ENCODE measurements at regions of chr7 and their contacts with region 1.

Region 1: DNA sequence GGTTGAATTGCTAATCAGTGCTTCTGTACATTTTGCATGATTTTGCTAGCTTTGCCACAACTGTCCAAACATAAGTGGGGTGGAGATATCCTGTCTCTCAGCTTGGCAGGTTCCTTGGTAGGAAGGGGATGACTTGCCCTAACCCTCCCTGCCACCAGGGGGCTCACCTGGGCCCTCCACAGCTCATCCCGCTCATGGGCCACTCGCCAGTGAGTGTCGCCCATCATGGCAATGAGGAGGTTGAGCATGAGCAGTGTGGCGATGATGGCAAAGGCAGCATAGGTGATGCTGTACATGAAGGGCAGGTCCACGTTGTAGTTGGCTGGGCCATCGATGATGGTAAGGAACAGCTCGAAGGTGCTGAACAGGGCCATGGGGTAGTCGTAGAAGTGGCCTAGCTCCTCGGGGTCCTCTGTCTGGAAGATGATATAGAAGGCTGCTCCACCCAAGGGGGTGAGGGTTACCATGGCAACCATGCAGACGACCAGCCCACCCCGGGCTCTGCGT is 12.2 kb downstream of the TRPV6 start:
- DNase-seq: peak in 1 of 2 experiments; percentile 84
- H3K4me3 ChIP-seq: no peak overlapping the region
- H3K27ac ChIP-seq: no peak overlapping the region
- H3K4me1 ChIP-seq: no peaks in the 10 kb centered on the region; a peak in 1 of 7 replicates
- H3K27me3 ChIP-seq: no peaks in the 10 kb centered on the region; a peak in 1 of 7 replicates
- CTCF ChIP-seq: peak; percentile 83 to 94 (median 90)
- EP300 ChIP-seq: no peak
- POLR2A ChIP-seq: no peak
- RAD21 ChIP-seq: peak; percentile 54 to 63

Region 2: DNA sequence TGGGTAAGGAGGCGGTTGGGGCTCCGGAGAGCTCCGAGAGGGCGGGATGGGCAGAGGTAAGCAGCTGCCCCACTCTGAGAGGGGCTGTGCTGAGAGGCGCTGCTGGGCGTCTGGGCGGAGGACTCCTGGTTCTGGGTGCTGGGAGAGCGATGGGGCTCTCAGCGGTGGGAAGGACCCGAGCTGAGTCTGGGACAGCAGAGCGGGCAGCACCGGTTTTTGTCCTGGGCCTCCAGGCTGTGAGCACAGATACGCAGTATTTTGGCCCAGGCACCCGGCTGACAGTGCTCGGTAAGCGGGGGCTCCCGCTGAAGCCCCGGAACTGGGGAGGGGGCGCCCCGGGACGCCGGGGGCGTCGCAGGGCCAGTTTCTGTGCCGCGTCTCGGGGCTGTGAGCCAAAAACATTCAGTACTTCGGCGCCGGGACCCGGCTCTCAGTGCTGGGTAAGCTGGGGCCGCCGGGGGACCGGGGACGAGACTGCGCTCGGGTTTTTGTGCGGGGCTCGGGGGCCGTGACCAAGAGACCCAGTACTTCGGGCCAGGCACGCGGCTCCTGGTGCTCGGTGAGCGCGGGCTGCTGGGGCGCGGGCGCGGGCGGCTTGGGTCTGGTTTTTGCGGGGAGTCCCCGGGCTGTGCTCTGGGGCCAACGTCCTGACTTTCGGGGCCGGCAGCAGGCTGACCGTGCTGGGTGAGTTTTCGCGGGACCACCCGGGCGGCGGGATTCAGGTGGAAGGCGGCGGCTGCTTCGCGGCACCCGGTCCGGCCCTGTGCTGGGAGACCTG is 76.5 kb before region 1 on chr7:
- CTCF ChIA-PET with region 1: interaction called, 17 read pairs
- POLR2A ChIA-PET with region 1: no interaction called
- DNase-seq: peak in 1 of 2 experiments; percentile 64
- H3K4me3 ChIP-seq: peak overlapping the region; percentile 51 to 80 (median 69)
- H3K27ac ChIP-seq: no peak overlapping the region
- H3K4me1 ChIP-seq: peaks cover 14 to 30% (median 17%) of the 10 kb centered on the region in 4 experiments
- H3K27me3 ChIP-seq: peaks cover 1 to 36% (median 26%) of the 10 kb centered on the region in 4 experiments; a peak in 6 of 7 replicates
- CTCF ChIP-seq: no peak
- EP300 ChIP-seq: no peak
- POLR2A ChIP-seq: peak; percentile 21 to 43; a peak in 1 of 3 replicates
- RAD21 ChIP-seq: no peak

Region 3: DNA sequence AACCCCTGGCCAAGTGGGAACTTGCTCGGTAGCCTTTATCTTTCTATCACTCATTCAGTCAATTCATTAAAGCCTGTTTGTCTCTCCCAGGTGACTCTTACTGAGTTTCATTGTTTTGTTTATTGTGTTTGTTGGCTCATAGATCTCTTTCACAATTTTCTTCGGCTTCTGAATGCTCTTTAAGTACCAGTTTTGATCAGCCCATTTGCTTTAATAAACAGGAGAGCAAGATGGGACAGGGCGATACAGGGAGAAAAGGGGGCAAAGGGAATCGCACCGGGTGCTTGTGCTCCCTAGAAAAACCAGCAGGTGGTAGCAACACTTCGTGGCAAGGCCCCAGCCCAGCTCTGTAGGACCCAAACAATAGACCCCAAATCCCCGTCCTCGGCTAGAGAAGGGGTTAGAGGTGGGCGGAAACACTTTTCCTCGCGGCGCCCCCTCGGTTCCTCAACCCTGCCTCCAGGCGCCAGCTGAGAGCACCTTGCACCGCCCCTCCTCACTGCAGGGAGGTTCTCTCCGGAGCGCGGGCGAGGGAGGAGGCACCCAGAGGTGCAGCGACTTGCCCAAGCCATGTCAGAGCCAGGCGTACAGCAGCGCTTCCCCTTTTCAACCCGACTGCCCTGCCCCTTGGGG is 19.5 kb before region 1 on chr7:
- CTCF ChIA-PET with region 1: interaction called, 107 read pairs
- POLR2A ChIA-PET with region 1: interaction called, 4 read pairs
- DNase-seq: peak; percentile 49 to 72
- H3K4me3 ChIP-seq: peak overlapping the region; percentile 83 to 97 (median 92)
- H3K27ac ChIP-seq: no peak overlapping the region
- H3K4me1 ChIP-seq: peaks cover 0 to 12% (median 4%) of the 10 kb centered on the region in 4 experiments; a peak in 4 of 7 replicates
- H3K27me3 ChIP-seq: peaks cover 0 to 12% (median 6%) of the 10 kb centered on the region in 4 experiments; a peak in 4 of 7 replicates
- CTCF ChIP-seq: peak; percentile 68 to 84 (median 79)
- EP300 ChIP-seq: no peak
- POLR2A ChIP-seq: no peak
- RAD21 ChIP-seq: peak; percentile 77 to 87

Region 4: DNA sequence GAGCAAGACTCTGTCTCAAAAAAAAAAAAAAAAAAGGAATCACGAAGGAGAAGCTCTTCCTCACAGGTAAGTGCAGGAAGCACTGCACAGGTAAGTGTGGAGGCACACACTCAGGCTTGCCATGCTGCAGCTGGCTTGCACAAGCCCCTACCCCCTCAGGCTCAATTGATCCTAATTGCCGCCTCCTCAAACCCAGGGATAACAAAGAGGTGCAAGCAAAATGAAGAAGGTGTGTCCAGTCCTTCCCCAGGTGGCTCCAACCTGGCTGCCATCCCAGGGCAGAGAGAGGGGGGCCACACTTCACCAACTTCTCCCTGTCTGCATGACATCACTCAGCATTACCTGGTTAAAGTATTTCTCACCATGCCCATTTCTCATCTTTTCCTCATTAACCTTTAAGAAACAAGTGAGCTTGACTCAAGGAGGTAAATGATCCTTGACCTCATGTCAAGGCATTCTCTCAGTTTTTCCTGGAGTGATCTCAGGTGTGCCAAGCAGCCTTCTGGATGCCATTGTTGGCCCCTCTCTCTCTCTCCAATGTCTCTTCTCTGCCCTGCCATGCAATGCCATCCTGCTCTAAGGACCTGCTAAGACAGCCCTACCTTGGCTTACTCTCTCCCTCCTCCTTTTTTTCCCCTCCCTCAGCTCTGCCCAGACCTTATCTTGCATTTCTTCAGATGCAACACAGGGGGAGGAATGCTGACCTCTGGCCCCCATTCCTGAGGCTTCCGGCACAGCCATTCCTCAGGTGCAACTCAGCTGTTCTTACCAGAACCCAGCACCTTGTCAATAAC is 25.2 kb after region 1 on chr7:
- CTCF ChIA-PET with region 1: interaction called, 69 read pairs
- POLR2A ChIA-PET with region 1: no interaction called
- DNase-seq: peak in 1 of 2 experiments; percentile 17
- H3K4me3 ChIP-seq: no peak overlapping the region
- H3K27ac ChIP-seq: no peak overlapping the region
- H3K4me1 ChIP-seq: peaks cover 0 to 3% (median 0%) of the 10 kb centered on the region in 4 experiments; a peak in 1 of 7 replicates
- H3K27me3 ChIP-seq: no peaks in the 10 kb centered on the region; a peak in 1 of 7 replicates
- CTCF ChIP-seq: no peak
- EP300 ChIP-seq: no peak
- POLR2A ChIP-seq: no peak
- RAD21 ChIP-seq: no peak

Region 5: DNA sequence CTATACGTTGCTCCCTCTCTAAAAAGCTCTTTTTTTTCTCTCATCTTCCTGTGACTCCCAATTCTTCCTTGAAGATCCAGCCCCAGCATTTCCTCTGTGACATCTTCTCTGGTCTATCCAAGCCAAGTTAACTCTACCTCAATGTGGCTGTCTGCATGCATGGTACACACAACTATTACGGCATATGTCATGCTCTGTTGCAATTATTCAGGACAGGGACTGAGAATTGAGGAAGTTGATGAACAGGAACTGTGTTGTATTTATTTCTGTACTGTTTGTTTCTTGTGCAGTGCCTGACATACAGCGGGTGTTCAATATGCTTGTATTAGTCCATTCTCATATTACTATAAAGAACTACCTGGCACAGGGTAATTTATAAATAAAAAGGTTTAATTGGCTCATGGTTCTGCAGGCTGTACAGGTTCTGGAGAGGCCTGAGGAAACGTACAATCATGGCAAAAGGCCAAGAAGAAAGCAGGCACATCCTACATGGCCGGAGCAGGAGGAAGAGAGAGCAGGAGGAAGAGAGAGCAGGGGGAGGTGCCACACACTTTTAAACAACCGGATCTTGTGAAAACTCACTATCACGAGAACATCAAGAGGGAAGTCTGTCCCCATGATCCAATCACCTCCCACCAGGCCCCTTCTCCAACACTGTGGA is 53.9 kb after region 1 on chr7:
- CTCF ChIA-PET with region 1: interaction called, 14 read pairs
- POLR2A ChIA-PET with region 1: interaction called, 3 read pairs
- DNase-seq: no peak
- H3K4me3 ChIP-seq: no peak overlapping the region
- H3K27ac ChIP-seq: no peak overlapping the region
- H3K4me1 ChIP-seq: no peaks in the 10 kb centered on the region; a peak in 1 of 7 replicates
- H3K27me3 ChIP-seq: peaks cover 0 to 8% (median 0%) of the 10 kb centered on the region in 4 experiments; a peak in 4 of 7 replicates
- CTCF ChIP-seq: no peak
- EP300 ChIP-seq: no peak
- POLR2A ChIP-seq: no peak
- RAD21 ChIP-seq: no peak

Region 6: DNA sequence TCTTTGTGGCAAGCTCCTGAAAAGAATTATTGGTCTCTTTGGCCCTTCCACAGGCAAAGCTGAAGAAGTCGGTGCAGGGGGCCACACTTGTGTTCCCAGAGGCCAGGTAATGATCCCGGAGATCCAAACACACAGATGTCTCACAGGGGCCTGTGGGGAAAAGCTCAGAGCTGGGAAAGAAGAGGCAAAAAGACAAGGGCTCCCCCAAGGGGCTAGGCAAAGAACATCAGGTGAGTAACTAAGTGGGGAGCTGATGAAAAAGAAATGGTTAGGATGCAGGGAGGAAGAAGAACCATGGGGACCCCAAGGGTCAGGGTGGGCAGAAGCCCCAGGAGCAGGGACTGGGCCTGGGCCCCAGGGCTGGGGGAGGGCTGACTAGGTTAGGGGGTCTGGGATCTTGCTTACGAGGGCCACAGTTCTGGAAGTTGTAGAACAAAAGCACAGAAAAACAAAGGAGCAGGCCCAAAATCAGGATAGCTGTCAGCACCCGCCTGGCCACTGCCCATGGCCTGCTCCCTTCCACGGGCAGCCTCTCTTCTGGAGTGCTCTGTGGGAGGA is 87.7 kb after region 1 on chr7:
- CTCF ChIA-PET with region 1: interaction called, 16 read pairs
- POLR2A ChIA-PET with region 1: no interaction called
- DNase-seq: no peak
- H3K4me3 ChIP-seq: no peak overlapping the region
- H3K27ac ChIP-seq: no peak overlapping the region
- H3K4me1 ChIP-seq: peaks cover 0 to 11% (median 6%) of the 10 kb centered on the region in 4 experiments; a peak in 6 of 7 replicates
- H3K27me3 ChIP-seq: no peaks in the 10 kb centered on the region
- CTCF ChIP-seq: peak in 2 of 3 experiments; percentile 32 to 45; a peak in 3 of 4 replicates
- EP300 ChIP-seq: no peak
- POLR2A ChIP-seq: no peak
- RAD21 ChIP-seq: peak; percentile 41 to 55; a peak in 3 of 4 replicates